ENCODE measurements at regions of chr22 and their contacts with region 1.

Region 1: DNA sequence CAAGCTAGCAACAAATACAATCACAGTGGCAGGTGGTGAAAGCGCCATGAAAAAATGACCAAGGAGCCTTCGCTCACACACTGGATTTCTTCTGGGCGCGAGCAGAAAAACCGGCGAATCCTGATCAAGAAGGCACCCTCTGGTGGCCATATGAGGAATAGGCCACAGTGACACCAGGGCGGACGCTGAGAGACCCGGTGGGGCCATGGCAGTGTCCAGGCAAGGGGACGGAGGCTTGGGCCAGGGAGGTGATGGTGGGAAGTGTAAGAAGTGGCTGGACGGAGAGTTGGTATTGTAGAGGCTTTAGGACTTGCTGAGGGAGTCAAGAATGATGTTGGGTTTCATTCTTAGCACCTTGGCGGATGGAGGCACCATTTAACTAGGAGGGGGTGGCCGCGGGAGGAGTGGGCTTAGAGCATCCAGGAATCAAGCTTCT is 16.9 kb upstream of the RAC2 start:
- DNase-seq: no peak
- ATAC-seq: peak; percentile 74
- H3K4me3 ChIP-seq: no peak overlapping the region
- H3K27ac ChIP-seq: no peak overlapping the region
- H3K4me1 ChIP-seq: peaks cover 2% of the 10 kb centered on the region; the same call in 1 of the 2 replicates
- H3K27me3 ChIP-seq: no peaks in the 10 kb centered on the region
- CTCF ChIP-seq: peak; percentile 83 to 96 (median 92)
- EP300 ChIP-seq: no peak
- POLR2A ChIP-seq: no peak
- RAD21 ChIP-seq: peak; percentile 84

Region 2: DNA sequence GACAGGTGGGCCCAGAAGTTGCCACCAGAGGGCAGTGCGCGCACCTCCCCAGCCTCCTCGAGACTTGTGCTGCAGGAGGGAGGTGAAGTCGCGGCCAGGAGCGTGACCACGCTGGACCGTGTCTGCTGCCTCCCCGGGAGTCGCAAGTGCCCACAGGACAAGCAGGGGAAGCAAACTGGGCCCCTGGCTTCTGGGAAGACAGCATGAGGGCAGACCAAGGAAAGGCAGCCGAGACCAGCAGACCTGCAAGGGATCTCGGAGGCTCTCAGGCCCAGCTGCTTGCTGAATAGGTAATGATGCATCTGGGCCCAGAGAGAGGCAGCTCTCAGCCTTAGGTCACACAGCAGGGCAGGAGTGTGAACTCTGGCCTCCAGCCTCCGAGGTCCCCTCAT is 94.2 kb before region 1 on chr22:
- CTCF ChIA-PET with region 1: interaction called, 16 read pairs
- POLR2A ChIA-PET with region 1: interaction called, 5 read pairs
- RAD21 ChIA-PET with region 1: interaction called, 15 read pairs
- SMC1A ChIA-PET with region 1: interaction called, 29 read pairs
- in situ Hi-C with region 1: no loop called
- intact Hi-C with region 1: no loop called
- DNase-seq: no peak
- ATAC-seq: peak; percentile 21
- H3K4me3 ChIP-seq: no peak overlapping the region; the same call in 1 of the 2 replicates
- H3K27ac ChIP-seq: no peak overlapping the region; the same call in 1 of the 2 replicates
- H3K4me1 ChIP-seq: peaks cover 62% of the 10 kb centered on the region
- H3K27me3 ChIP-seq: no peaks in the 10 kb centered on the region
- CTCF ChIP-seq: peak in 2 of 3 experiments; percentile 87 to 92; a peak in 5 of 6 replicates
- EP300 ChIP-seq: no peak
- POLR2A ChIP-seq: no peak
- RAD21 ChIP-seq: peak; percentile 77

Region 3: GRCh38 chr22:37218771-37219411 is 42.0 kb before region 1 on chr22:
- CTCF ChIA-PET with region 1: interaction called, 88 read pairs
- POLR2A ChIA-PET with region 1: interaction called, 9 read pairs
- RAD21 ChIA-PET with region 1: interaction called, 41 read pairs
- SMC1A ChIA-PET with region 1: interaction called, 73 read pairs
- in situ Hi-C with region 1: no loop called
- intact Hi-C with region 1: loop called (anchors 1 kb)
- DNase-seq: peak; percentile 99
- ATAC-seq: peak; percentile 82
- H3K4me3 ChIP-seq: peak overlapping the region; percentile 80
- H3K27ac ChIP-seq: peak overlapping the region; percentile 99
- H3K4me1 ChIP-seq: peaks cover 73% of the 10 kb centered on the region
- H3K27me3 ChIP-seq: no peaks in the 10 kb centered on the region
- CTCF ChIP-seq: no peak
- EP300 ChIP-seq: peak; percentile 85 to 89
- POLR2A ChIP-seq: peak; percentile 62; the same call in 1 of the 2 replicates
- RAD21 ChIP-seq: no peak

Region 4: GRCh38 chr22:37244114-37244921 is 16.6 kb before region 1 on chr22 and contains the start of gene RAC2:
- CTCF ChIA-PET with region 1: interaction called, 265 read pairs
- POLR2A ChIA-PET with region 1: interaction called, 51 read pairs
- RAD21 ChIA-PET with region 1: interaction called, 132 read pairs
- SMC1A ChIA-PET with region 1: interaction called, 165 read pairs
- in situ Hi-C with region 1: no loop called
- intact Hi-C with region 1: no loop called
- DNase-seq: no peak
- ATAC-seq: peak; percentile 69
- H3K4me3 ChIP-seq: peak within 1 kb of the TSS; percentile 91
- H3K27ac ChIP-seq: peak within 1 kb of the TSS; percentile 96
- H3K4me1 ChIP-seq: peaks cover 49% of the 10 kb centered on the region
- H3K27me3 ChIP-seq: no peaks in the 10 kb centered on the region
- CTCF ChIP-seq: no peak
- EP300 ChIP-seq: 0 out of 4 replicates have a peak, but pooled peaks of 1 of the 2 experiments have one; percentile 37
- POLR2A ChIP-seq: peak; percentile 98
- RAD21 ChIP-seq: no peak
- polyA plus RNA-seq, gene RAC2: 102 to 108 TPM

Region 5: DNA sequence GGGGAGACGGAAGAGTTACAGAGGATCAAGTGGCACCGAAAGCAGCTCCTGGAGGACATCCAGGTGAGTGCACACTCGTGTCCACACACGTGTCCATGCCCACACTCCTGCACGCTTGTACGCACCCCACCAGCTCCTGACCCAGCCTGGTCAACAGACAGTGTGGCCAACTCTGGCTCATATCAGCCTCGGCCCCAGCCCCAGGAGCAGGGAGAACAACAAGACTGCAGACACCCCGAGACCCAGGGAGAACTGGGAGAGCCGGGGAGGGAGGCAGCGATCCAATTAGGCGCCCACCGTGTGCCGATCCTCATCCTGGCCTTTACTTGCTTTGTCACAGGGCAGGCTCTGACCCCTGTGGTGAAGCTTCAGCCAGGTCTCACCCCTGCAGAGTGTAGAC is 31.7 kb after region 1 on chr22:
- CTCF ChIA-PET with region 1: no interaction called
- POLR2A ChIA-PET with region 1: no interaction called
- RAD21 ChIA-PET with region 1: no interaction called
- SMC1A ChIA-PET with region 1: no interaction called
- in situ Hi-C with region 1: no loop called
- intact Hi-C with region 1: no loop called
- DNase-seq: no peak
- ATAC-seq: no peak
- H3K4me3 ChIP-seq: no peak overlapping the region
- H3K27ac ChIP-seq: no peak overlapping the region
- H3K4me1 ChIP-seq: peaks cover 5% of the 10 kb centered on the region
- H3K27me3 ChIP-seq: no peaks in the 10 kb centered on the region
- CTCF ChIP-seq: no peak
- EP300 ChIP-seq: no peak
- POLR2A ChIP-seq: no peak
- RAD21 ChIP-seq: no peak

Region 6: DNA sequence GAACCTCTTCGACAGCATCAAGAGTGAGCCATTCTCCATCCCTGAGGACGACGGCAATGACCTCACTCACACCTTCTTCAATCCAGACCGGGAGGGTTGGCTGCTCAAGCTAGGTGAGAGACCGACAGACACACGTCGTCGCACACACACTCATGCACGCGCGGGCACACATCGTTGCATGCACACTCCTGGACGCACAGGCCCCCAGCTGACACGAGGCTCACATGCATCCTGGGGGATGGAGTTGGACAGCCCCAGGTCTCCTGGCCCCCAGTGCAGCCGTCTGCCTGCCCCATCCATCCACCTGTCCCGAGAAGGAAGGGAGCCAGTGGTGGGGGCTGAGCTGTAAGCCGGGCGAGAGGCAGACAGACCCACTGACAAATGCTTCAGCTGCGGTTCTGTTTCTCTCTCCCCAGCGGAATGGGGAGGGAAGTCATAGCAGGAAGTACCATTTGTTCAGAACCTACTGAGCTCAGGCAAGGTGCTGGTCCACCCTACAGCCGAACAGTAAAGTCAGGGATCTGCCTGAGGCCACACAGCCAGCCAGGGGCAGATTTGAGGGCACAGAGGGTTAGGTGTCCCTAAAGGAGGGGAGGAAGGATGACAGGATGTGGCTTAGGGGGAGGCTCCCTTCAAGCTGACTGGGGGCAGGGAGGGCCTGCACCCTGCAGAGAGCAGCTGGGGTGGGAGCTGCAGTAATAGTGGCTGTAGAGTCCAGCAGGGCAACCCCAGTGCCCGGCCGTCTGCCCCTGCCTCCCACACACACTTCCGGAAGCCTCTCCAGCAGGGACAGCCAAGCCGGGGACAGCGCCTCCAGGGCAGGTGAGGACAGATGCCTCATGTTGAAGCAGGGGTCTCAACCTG is 48.5 kb after region 1 on chr22:
- CTCF ChIA-PET with region 1: interaction called, 181 read pairs
- POLR2A ChIA-PET with region 1: interaction called, 5 read pairs
- RAD21 ChIA-PET with region 1: interaction called, 35 read pairs
- SMC1A ChIA-PET with region 1: interaction called, 65 read pairs
- in situ Hi-C with region 1: no loop called
- intact Hi-C with region 1: no loop called
- DNase-seq: peak; percentile 55
- ATAC-seq: peak; percentile 55
- H3K4me3 ChIP-seq: no peak overlapping the region; the same call in 1 of the 2 replicates
- H3K27ac ChIP-seq: peak overlapping the region; percentile 91
- H3K4me1 ChIP-seq: peaks cover 74% of the 10 kb centered on the region
- H3K27me3 ChIP-seq: no peaks in the 10 kb centered on the region
- CTCF ChIP-seq: no peak
- EP300 ChIP-seq: no peak; a peak in 1 of 4 replicates
- POLR2A ChIP-seq: peak; percentile 40; the same call in 1 of the 2 replicates
- RAD21 ChIP-seq: no peak

Region 7: DNA sequence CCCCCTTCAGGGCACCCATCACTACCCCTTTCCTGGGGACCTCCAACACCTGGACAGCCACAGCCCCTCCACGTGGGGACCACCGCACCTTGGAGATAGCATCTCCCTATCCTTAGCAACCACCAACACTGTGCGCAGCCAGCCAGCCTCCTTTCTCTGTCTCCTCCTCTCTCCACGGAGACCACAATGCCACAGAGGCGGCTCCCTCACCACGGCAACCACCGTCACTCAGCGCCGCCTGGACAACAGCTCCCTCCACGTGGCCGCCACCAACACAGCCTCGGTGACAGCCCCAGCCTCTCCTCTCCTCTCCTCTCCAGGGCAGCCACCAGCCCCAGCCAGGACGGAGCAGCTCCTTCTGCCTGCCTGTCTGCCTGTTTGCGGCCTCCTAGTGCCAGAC is 155.9 kb after region 1 on chr22:
- CTCF ChIA-PET with region 1: no interaction called
- POLR2A ChIA-PET with region 1: no interaction called
- RAD21 ChIA-PET with region 1: no interaction called
- SMC1A ChIA-PET with region 1: no interaction called
- in situ Hi-C with region 1: no loop called
- intact Hi-C with region 1: no loop called
- DNase-seq: no peak
- ATAC-seq: peak; percentile 71
- H3K4me3 ChIP-seq: no peak overlapping the region
- H3K27ac ChIP-seq: no peak overlapping the region
- H3K4me1 ChIP-seq: no peaks in the 10 kb centered on the region
- H3K27me3 ChIP-seq: peaks cover 10% of the 10 kb centered on the region in 2 experiments
- CTCF ChIP-seq: no peak
- EP300 ChIP-seq: no peak
- POLR2A ChIP-seq: no peak
- RAD21 ChIP-seq: no peak

Region 8: GRCh38 chr22:37428649-37429586 is 168.0 kb after region 1 on chr22:
- CTCF ChIA-PET with region 1: interaction called, 16 read pairs
- POLR2A ChIA-PET with region 1: no interaction called
- RAD21 ChIA-PET with region 1: interaction called, 3 read pairs
- SMC1A ChIA-PET with region 1: interaction called, 10 read pairs
- in situ Hi-C with region 1: no loop called
- intact Hi-C with region 1: loop called (anchors 2 kb)
- DNase-seq: no peak
- ATAC-seq: peak; percentile 87
- H3K4me3 ChIP-seq: no peak overlapping the region
- H3K27ac ChIP-seq: no peak overlapping the region
- H3K4me1 ChIP-seq: no peaks in the 10 kb centered on the region
- H3K27me3 ChIP-seq: peaks cover 11 to 15% of the 10 kb centered on the region in 2 experiments
- CTCF ChIP-seq: peak; percentile 75 to 81 (median 75)
- EP300 ChIP-seq: no peak
- POLR2A ChIP-seq: no peak
- RAD21 ChIP-seq: peak; percentile 56

Measured in GM12878 (cell line).